ENCODE measurements at regions of chr17 and their contacts with region 1.

Region 1: GRCh38 chr17:50269477-50270434 is 4.5 kb upstream of the TMEM92 start:
- DNase-seq: no peak
- H3K4me3 ChIP-seq: peak overlapping the region; percentile 53
- CTCF ChIP-seq: peak; percentile 80

Region 2: DNA sequence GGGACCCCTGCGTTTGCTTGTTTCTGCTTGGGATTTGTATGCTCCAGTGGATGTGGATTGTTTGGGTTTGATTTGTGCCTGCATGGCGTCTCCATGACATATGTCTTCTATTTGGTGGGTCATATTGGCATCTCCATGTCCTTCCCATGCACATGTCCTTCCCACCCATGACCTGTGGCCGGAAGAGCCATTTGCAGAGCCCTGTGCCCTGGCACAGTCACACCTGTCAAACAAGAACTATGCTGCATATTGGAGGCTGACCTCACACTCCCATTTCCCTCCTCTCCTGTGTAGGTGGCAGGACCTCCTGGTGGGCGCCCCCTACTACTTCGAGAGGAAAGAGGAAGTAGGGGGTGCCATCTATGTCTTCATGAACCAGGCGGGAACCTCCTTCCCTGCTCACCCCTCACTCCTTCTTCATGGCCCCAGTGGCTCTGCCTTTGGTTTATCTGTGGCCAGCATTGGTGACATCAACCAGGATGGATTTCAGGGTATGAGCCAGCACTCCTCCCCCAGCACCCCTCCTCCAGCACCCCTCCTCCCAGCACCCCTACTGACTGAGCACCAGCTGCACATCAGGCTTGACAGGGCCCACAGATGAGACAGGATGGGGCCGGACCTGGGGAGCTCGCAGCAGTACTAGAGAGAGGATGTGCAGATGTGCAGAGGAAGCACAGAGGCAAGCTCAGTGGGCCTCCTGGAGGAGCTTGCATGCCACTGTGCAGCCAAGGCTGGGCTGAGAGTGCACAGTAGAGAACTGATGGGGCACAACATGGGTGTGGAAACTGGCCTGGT is 197.9 kb before region 1 on chr17:
- CTCF ChIA-PET with region 1: no interaction called
- POLR2A ChIA-PET with region 1: no interaction called
- DNase-seq: no peak
- H3K4me3 ChIP-seq: no peak overlapping the region
- CTCF ChIP-seq: no peak

Region 3: GRCh38 chr17:50177983-50178834 is 91.5 kb before region 1 on chr17:
- CTCF ChIA-PET with region 1: interaction called, 410 read pairs
- POLR2A ChIA-PET with region 1: interaction called, 2,316 read pairs
- DNase-seq: no peak
- H3K4me3 ChIP-seq: no peak overlapping the region
- CTCF ChIP-seq: peak; percentile 71

Region 4: GRCh38 chr17:50184064-50184463 is 85.7 kb before region 1 on chr17:
- CTCF ChIA-PET with region 1: interaction called, 410 read pairs
- POLR2A ChIA-PET with region 1: interaction called, 2,316 read pairs
- DNase-seq: no peak
- H3K4me3 ChIP-seq: no peak overlapping the region; the same call in 1 of the 2 replicates
- CTCF ChIP-seq: peak; percentile 24

Region 5: DNA sequence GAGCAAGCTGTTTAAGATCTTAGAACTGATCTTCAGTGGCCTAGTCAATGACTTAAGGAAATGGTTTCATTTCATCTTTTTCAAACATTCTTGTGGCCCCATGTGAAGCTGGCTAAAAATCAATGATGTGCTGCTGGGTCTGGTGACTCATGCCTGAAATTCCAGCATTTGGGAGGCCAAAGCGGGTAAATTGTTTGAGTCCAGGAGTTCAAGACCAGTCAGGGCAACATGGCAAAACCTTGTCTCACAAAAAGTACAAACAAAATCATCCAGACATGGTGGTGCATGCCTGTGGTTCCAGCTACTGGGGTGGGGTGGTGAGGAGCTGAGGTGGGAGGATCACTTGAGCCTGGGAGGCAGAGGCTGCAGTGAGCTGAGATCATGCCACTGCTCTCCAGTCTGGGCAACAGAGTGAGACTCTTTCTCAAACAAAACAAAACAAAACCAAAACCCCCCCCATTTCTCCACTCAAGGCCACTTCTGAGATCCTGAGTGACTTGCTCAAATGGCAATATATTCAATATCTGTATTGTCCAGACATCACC is 50.9 kb before region 1 on chr17:
- CTCF ChIA-PET with region 1: interaction called, 489 read pairs
- POLR2A ChIA-PET with region 1: interaction called, 22 read pairs
- DNase-seq: peak; percentile 96
- H3K4me3 ChIP-seq: no peak overlapping the region; the same call in 1 of the 2 replicates
- CTCF ChIP-seq: no peak

Measured in AG04449 (cell line).